A549 (cell line): ENCODE measurements at regions of chr5 and their contacts with region 1.

Region 1: GRCh38 chr5:60687927-60688720 is 11.8 kb downstream of the DEPDC1B start:
- DNase-seq: peak; percentile 50 to 75
- ATAC-seq: peak; percentile 99 to 100
- H3K4me3 ChIP-seq: no peak overlapping the region
- H3K27ac ChIP-seq: no peak overlapping the region
- H3K4me1 ChIP-seq: peaks cover 4% of the 10 kb centered on the region; the same call in 1 of the 3 replicates
- CTCF ChIP-seq: 0 out of 3 replicates have a peak, but pooled peaks have one; percentile 16
- EP300 ChIP-seq: no peak
- POLR2A ChIP-seq: no peak
- RAD21 ChIP-seq: peak in 1 of 2 experiments; percentile 12; a peak in 1 of 5 replicates

Region 2: DNA sequence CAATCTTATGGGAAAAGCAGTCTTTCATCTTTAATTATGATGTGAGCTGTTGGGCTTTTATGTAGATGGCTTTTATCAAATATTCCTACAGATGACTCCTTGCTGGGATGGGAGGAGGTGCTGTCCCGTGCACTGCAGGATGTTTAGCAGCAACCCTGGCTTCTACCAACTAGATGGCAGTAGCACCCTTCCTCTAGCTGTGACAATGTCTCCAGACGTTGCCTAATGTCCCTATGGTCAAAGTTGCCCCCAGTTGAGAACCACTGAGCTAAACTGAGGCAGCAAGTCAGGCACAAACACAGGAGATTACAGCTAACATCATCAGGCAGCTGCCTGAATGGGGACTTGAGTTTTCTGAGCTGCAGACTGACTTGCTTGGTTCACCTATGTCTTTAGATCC is 392.7 kb before region 1 on chr5:
- CTCF ChIA-PET with region 1: no interaction called
- POLR2A ChIA-PET with region 1: no interaction called
- DNase-seq: peak in 1 of 2 experiments; percentile 61
- ATAC-seq: peak; percentile 76 to 84; a peak in 4 of 6 replicates
- H3K4me3 ChIP-seq: no peak overlapping the region
- H3K27ac ChIP-seq: no peak overlapping the region
- H3K4me1 ChIP-seq: no peaks in the 10 kb centered on the region
- CTCF ChIP-seq: peak; percentile 61
- EP300 ChIP-seq: no peak
- POLR2A ChIP-seq: no peak
- RAD21 ChIP-seq: peak; percentile 80 to 89

Region 3: GRCh38 chr5:60613826-60614225 is 74.3 kb before region 1 on chr5:
- CTCF ChIA-PET with region 1: no interaction called
- POLR2A ChIA-PET with region 1: no interaction called
- DNase-seq: no peak
- ATAC-seq: no peak
- H3K4me3 ChIP-seq: no peak overlapping the region
- H3K27ac ChIP-seq: no peak overlapping the region
- H3K4me1 ChIP-seq: no peaks in the 10 kb centered on the region
- CTCF ChIP-seq: no peak
- EP300 ChIP-seq: no peak
- POLR2A ChIP-seq: no peak
- RAD21 ChIP-seq: no peak

Region 4: GRCh38 chr5:60677844-60678664 is 10.1 kb before region 1 on chr5:
- CTCF ChIA-PET with region 1: interaction called, 24 read pairs
- POLR2A ChIA-PET with region 1: no interaction called
- DNase-seq: peak; percentile 54 to 56
- ATAC-seq: peak; percentile 64 to 85
- H3K4me3 ChIP-seq: no peak overlapping the region
- H3K27ac ChIP-seq: peak overlapping the region in 1 of 2 experiments; percentile 14; a peak in 1 of 6 replicates
- H3K4me1 ChIP-seq: peaks cover 20% of the 10 kb centered on the region
- CTCF ChIP-seq: peak; percentile 88
- EP300 ChIP-seq: no peak
- POLR2A ChIP-seq: no peak
- RAD21 ChIP-seq: peak; percentile 81 to 88